BJ (cell line): ENCODE measurements at regions of chr3 and their contacts with region 1.

Region 1: GRCh38 chr3:32374788-32375595 is 16.7 kb upstream of the CMTM7 start:
- DNase-seq: no peak
- H3K4me3 ChIP-seq: no peak overlapping the region
- H3K27me3 ChIP-seq: no peaks in the 10 kb centered on the region; the same call in 1 of the 2 replicates
- CTCF ChIP-seq: peak; percentile 65

Region 2: DNA sequence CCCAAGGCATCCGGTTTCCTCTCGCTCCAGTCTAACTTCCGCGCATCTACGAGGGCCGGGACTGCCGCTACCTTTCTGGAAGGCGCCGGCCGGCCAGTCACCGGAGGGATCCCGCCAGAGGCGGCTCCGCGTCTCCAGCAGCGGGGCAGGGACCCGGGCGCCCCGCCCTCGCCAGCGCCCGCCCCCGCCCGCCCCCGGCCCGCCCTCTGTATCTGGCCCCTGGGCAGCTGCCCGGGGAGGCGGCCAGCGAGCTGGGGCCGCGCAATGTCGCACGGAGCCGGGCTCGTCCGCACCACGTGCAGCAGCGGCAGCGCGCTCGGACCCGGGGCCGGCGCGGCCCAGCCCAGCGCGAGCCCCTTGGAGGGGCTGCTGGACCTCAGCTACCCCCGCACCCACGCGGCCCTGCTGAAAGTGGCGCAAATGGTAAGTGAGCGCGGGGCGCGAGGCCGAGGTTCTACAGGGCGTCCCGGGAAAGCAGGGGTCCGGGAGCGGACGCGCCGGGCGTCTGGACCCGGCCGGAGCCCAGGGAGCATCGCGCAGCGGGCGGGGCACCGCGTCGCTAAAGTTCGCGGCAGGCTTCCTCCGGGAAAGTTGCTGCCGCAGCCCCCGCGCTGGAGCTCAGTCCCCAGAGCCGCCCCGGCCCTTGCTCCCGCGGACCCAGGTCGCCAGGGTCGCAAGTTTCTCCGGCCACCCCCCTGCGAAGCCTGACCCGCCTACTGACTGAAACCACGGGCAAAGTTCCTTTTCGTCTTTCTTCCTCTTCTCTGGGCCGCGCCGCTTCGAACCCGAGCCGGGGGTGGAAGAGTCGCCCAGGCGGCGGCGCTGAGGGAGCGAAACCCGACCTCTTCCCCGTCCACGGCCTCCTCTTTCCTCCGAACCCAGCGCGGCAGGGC is 16.9 kb after region 1 on chr3 and contains the start of gene CMTM7:
- CTCF ChIA-PET with region 1: interaction called, 11 read pairs
- POLR2A ChIA-PET with region 1: no interaction called
- DNase-seq: no peak
- H3K4me3 ChIP-seq: peak within 1 kb of the TSS; percentile 85
- H3K27me3 ChIP-seq: no peaks in the 10 kb centered on the region
- CTCF ChIP-seq: no peak
- polyA plus RNA-seq, gene CMTM7: 12.7 and 13.7 TPM in 2 replicates

Region 3: DNA sequence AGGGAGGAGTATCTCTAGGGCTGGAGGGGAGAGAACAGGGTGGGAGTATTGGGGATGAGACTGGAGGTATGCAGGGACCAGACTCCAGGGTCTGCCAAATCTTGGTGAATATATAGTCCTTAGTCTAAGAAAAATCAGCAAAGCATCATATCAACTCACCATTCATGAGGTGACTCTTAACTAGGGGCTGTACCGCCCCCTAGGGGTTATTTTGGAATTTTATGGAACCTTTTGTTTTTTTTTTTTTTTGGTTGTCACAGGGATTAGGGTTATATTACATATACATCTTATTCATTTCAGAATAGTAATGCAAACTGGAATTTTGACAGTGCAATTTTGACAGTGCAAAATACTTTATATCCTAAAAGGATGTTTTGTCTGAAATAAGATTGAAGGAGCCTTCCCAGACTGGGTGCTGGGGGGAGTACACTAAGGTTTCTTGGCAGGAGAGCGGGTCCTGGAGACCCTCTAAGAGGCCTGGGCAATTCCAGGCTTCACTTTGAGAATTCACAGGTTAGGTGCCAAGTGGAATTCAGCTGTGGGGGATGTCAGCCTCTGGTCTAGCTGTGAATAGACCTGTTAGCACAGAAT is 24.1 kb after region 1 on chr3:
- CTCF ChIA-PET with region 1: interaction called, 11 read pairs
- POLR2A ChIA-PET with region 1: no interaction called
- DNase-seq: no peak
- H3K4me3 ChIP-seq: no peak overlapping the region
- H3K27me3 ChIP-seq: no peaks in the 10 kb centered on the region
- CTCF ChIP-seq: peak; percentile 67